GM18951 (cell line): ENCODE measurements at regions of chr2 and their contacts with region 1.

Region 1: DNA sequence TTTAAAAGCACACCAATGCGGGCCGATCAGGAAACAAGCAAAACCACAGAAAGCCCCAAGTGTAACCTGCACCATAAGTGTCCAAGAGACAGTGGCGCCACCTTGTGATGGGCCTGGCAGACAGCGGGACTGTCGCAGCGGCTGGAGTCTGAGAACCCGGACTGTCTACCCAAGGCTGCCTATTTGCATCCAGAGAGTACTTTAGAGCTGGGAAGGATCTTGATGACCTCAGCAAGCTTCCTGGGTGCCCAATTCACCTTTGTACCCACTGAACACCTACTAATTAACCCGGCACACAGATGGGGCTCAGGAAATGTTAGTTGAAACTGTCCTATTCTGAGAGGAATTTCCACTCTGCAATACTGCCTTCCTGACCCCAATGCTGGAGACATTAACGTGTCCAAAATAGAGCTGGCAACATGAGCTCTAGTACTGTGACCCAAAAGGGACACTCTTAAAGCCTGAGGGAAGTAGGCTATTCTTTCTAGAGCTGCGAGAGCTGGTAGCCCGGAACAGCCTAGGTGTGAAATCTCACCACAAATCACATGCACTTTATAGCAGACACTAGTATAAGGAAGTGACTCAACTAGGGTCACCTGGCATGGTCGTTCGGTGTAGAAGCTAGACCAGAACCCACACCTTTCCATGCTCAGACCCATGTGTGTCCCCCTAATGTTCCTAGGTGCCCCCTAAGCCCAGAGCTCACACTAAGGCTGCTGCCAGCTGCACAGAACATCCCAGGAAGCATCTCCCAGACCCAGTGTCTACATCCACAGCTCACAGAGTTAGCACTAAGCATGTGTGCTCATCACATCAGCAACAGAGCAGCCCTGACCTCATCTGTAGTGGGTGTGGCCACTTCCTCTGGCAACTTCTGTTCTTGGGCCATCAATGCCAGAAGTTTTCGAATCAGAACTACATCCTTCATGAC is 25.4 kb downstream of the POLR1A start:
- POLR2A ChIP-seq: no peak

Region 2: GRCh38 chr2:85826990-85827878 is 253.0 kb before region 1 on chr2:
- in situ Hi-C with region 1: loop called (anchors 5 kb)
- POLR2A ChIP-seq: no peak

Region 3: DNA sequence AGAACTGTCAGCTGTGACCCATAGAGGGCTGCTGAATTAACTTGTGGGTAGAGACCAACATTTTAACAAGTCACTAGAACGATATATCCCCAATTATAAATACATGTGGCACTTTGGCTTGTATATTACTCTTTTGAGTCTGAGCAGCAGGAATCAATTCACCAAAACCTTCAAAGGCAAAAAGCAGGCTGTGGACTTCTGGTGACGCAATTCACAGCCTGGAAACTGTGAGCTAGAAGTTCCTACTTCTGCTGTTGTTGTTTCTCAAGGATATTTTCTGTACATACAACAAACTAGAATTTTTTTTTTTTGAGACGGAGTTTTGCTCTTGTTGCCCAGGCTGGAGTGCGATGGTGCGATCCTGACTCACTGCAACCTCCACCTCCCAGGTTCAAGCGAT is 63.1 kb after region 1 on chr2:
- in situ Hi-C with region 1: no loop called
- POLR2A ChIP-seq: no peak